HepG2 (cell line): ENCODE measurements at regions of chr10 and their contacts with region 1.

Region 1: DNA sequence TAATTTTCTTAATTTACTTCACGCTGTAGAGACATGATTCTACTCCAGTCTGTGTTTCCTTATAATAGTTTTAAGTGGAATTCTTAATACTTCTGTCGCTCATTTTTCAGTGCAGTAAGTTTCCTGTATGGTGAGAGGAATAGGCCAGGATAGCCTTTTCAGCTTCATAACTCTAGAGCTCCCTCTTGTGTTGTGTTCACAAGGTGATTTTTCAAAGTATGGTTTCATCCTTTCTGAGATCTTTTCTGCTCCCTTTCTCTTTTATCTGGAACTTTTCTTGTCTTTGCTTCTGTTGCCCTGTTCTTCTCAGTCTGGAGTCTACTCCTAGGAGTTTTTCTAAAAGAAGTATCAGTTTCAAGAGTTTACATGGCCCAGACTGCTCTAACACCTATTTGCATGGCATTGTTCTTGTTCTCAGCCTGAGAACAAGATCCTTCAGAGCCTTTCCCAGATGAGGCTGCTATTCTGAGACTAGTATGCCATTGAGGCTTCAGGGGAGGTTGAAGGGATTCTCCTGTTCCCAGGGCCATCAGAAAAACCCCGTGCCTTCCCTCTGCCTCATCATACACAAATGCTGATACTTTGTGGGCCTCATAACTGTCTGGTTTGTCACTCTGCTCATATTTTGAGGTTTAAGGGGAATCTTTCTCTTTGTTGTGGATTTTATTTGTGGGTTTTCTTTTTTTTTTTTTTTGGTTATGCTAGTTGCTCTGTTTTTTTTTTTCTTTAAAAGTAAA is 21.8 kb downstream of the NET1 start:
- DNase-seq: peak; percentile 41
- ATAC-seq: peak; percentile 66; the same call in 2 of the 3 replicates
- H3K4me3 ChIP-seq: no peak overlapping the region
- H3K27ac ChIP-seq: no peak overlapping the region
- H3K4me1 ChIP-seq: peaks cover 17% of the 10 kb centered on the region
- H3K27me3 ChIP-seq: no peaks in the 10 kb centered on the region
- CTCF ChIP-seq: peak; percentile 74
- EP300 ChIP-seq: no peak
- POLR2A ChIP-seq: no peak
- RAD21 ChIP-seq: peak; percentile 59; the same call in 1 of the 2 replicates

Region 2: DNA sequence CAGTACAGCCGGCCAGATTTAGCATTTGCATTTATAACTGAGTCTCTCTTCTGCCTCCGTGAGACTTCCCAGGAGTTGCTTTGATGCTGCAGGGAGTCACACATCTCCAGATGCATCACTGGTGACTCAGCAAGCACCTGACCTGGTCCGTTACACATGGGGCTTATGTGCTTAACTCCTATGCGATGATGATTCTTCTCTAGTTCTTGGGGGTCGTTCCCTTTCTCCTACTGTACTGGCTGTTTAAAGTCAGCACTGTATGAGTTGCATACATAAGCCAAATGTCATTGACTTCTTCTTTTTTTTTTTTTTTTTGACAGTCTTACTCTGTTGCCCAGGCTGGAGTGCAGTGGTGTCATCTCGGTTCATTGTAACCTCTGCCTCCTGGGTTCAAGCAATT is 621.2 kb before region 1 on chr10:
- CTCF ChIA-PET with region 1: interaction called, 32 read pairs
- POLR2A ChIA-PET with region 1: no interaction called
- in situ Hi-C with region 1: no loop called
- intact Hi-C with region 1: loop called (anchors 1 kb)
- DNase-seq: peak; percentile 58
- ATAC-seq: peak; percentile 44; the same call in 2 of the 3 replicates
- H3K4me3 ChIP-seq: no peak overlapping the region
- H3K27ac ChIP-seq: no peak overlapping the region
- H3K4me1 ChIP-seq: peaks cover 33% of the 10 kb centered on the region
- H3K27me3 ChIP-seq: peaks cover 0 to 6% of the 10 kb centered on the region in 2 experiments; a peak in 1 of 5 replicates
- CTCF ChIP-seq: no peak
- EP300 ChIP-seq: no peak
- POLR2A ChIP-seq: no peak
- RAD21 ChIP-seq: no peak

Region 3: GRCh38 chr10:4825851-4826665 is 608.1 kb before region 1 on chr10 and contains the start of gene AKR1E2:
- CTCF ChIA-PET with region 1: no interaction called
- POLR2A ChIA-PET with region 1: no interaction called
- in situ Hi-C with region 1: loop called (anchors 10 kb)
- intact Hi-C with region 1: no loop called
- DNase-seq: no peak
- ATAC-seq: no peak; the same call in 2 of the 3 replicates
- H3K4me3 ChIP-seq: no peak within 1 kb of the TSS
- H3K27ac ChIP-seq: no peak within 1 kb of the TSS
- H3K4me1 ChIP-seq: no peaks in the 10 kb centered on the region
- H3K27me3 ChIP-seq: peaks cover 1 to 24% of the 10 kb centered on the region in 2 experiments; a peak in 3 of 5 replicates
- CTCF ChIP-seq: no peak
- EP300 ChIP-seq: no peak
- POLR2A ChIP-seq: no peak
- RAD21 ChIP-seq: no peak
- total RNA-seq, gene AKR1E2: not detected in 2 replicates

Region 4: GRCh38 chr10:5385224-5385623 is 49.0 kb before region 1 on chr10:
- CTCF ChIA-PET with region 1: no interaction called
- POLR2A ChIA-PET with region 1: no interaction called
- in situ Hi-C with region 1: no loop called
- intact Hi-C with region 1: loop called (anchors 1 kb)
- DNase-seq: no peak
- ATAC-seq: no peak
- H3K4me3 ChIP-seq: no peak overlapping the region
- H3K27ac ChIP-seq: no peak overlapping the region
- H3K4me1 ChIP-seq: no peaks in the 10 kb centered on the region
- H3K27me3 ChIP-seq: no peaks in the 10 kb centered on the region
- CTCF ChIP-seq: no peak
- EP300 ChIP-seq: no peak
- POLR2A ChIP-seq: no peak
- RAD21 ChIP-seq: no peak